ENCODE measurements at regions of chr1 and their contacts with region 1.

Region 1: DNA sequence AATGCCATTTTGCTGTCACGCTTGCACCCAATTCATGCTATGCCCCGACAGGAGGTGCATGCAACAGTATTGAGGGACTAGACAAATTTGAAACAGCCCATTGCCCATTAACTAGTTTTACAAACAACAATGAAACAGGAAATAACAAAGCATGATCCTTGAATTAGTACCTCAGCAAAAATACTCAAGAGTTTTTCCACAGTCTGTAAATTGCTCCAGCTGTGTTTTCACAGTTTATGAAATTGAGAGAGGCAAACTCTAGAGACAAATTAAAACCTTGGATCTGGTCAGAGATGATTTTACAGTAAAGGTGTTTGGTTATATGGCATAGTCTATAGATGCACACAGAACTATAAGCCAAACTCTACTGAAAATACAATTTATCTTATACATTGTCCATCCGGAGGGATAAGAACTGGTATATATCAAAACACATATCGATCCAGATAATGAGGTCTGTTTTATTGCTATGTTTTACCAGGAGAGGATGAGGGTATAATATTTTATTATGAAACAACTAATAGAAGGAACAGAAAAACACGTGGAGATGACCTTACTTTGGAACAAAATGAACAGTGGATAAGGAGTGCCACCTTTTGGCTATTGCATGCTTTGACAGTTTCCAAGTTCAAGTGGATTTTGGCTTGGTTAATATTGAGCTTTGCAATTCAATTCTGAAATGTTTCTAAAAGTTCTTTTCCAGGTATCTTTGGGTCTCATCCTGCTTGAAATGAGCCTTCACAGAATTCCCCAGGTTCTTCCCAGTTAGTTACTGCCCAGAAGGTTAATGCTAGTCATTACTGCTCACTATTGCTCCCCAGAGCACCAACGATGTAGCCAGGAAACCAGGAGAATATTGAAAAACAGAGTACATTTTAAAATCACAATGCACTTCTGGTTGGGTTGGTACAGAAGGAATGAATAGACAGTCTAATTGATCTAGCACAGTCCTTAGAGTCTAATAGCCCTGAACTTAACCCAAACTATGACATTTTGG is 45.7 kb downstream of the ZC3H11B start:
- DNase-seq: no peak
- CTCF ChIP-seq: peak; percentile 61

Region 2: GRCh38 chr1:219555031-219555692 is 12.1 kb before region 1 on chr1:
- CTCF ChIA-PET with region 1: interaction called, 65 read pairs
- POLR2A ChIA-PET with region 1: no interaction called
- DNase-seq: no peak
- CTCF ChIP-seq: no peak

Region 3: DNA sequence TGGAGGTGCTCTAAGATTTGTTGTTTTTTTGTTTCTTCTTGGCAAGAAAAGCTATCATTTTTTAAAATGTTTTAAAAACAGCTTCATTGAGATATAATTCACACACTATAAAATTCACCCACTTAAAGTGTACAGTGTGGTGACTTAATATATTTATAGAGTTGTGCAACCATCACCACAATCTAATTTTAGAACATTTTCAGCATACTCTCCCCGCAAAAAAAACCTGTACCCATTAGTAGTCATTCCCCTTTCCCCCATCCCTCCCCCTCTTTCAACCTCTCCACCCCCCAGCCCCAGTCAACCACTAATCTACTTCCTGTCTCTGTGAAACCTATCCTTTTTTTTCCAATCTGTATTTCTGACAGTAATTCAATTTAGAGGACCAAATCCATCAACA is 15.0 kb after region 1 on chr1:
- CTCF ChIA-PET with region 1: interaction called, 47 read pairs
- POLR2A ChIA-PET with region 1: no interaction called
- DNase-seq: no peak
- CTCF ChIP-seq: no peak